CD4-positive, alpha-beta memory T cell (primary cell): ENCODE measurements at regions of chr22 and their contacts with region 1.

Region 1: GRCh38 chr22:32796865-32797573 is 4.5 kb upstream of the TIMP3 start:
- DNase-seq: peak; percentile 34 to 45 (median 44)
- H3K4me3 ChIP-seq: no peak overlapping the region
- H3K4me3 Mint-ChIP-seq: no peak overlapping the region
- H3K27ac ChIP-seq: no peak overlapping the region
- H3K27ac Mint-ChIP-seq: no peak overlapping the region
- H3K4me1 ChIP-seq: no peaks in the 10 kb centered on the region
- H3K4me1 Mint-ChIP-seq: peaks cover 0 to 9% (median 2%) of the 10 kb centered on the region in 4 donors
- H3K27me3 ChIP-seq: peaks cover 7% of the 10 kb centered on the region
- H3K27me3 Mint-ChIP-seq: peaks cover 22 to 35% of the 10 kb centered on the region in 2 donors

Region 2: GRCh38 chr22:32528984-32529982 is 267.7 kb before region 1 on chr22:
- CTCF ChIA-PET with region 1: interaction called, 38 read pairs
- POLR2A ChIA-PET with region 1: no interaction called
- intact Hi-C with region 1: no loop called
- DNase-seq: peak; percentile 34 to 50 (median 42)
- H3K4me3 ChIP-seq: no peak overlapping the region
- H3K4me3 Mint-ChIP-seq: no peak overlapping the region
- H3K27ac ChIP-seq: no peak overlapping the region
- H3K27ac Mint-ChIP-seq: no peak overlapping the region
- H3K4me1 ChIP-seq: no peaks in the 10 kb centered on the region
- H3K4me1 Mint-ChIP-seq: no peaks in the 10 kb centered on the region
- H3K27me3 ChIP-seq: no peaks in the 10 kb centered on the region
- H3K27me3 Mint-ChIP-seq: peaks cover 7 to 8% of the 10 kb centered on the region in 2 donors

Region 3: GRCh38 chr22:32660292-32660691 is 136.7 kb before region 1 on chr22:
- CTCF ChIA-PET with region 1: interaction called, 74 read pairs
- POLR2A ChIA-PET with region 1: interaction called, 3 read pairs
- intact Hi-C with region 1: loop called (anchors 1 kb)
- DNase-seq: peak in 4 of 5 donors; percentile 24 to 37 (median 28)
- H3K4me3 ChIP-seq: no peak overlapping the region
- H3K4me3 Mint-ChIP-seq: no peak overlapping the region
- H3K27ac ChIP-seq: no peak overlapping the region
- H3K27ac Mint-ChIP-seq: no peak overlapping the region
- H3K4me1 ChIP-seq: no peaks in the 10 kb centered on the region
- H3K4me1 Mint-ChIP-seq: no peaks in the 10 kb centered on the region
- H3K27me3 ChIP-seq: no peaks in the 10 kb centered on the region
- H3K27me3 Mint-ChIP-seq: peaks cover 7% of the 10 kb centered on the region in 2 donors

Region 4: GRCh38 chr22:32723643-32724042 is 73.4 kb before region 1 on chr22:
- CTCF ChIA-PET with region 1: interaction called, 11 read pairs
- POLR2A ChIA-PET with region 1: no interaction called
- intact Hi-C with region 1: no loop called
- DNase-seq: peak in 4 of 5 donors; percentile 11 to 25 (median 16)
- H3K4me3 ChIP-seq: no peak overlapping the region
- H3K4me3 Mint-ChIP-seq: peak overlapping the region in 7 of 8 donors; percentile 51 to 81 (median 69)
- H3K27ac ChIP-seq: no peak overlapping the region
- H3K27ac Mint-ChIP-seq: peak overlapping the region in 6 of 7 donors; percentile 7 to 92 (median 65)
- H3K4me1 ChIP-seq: peaks cover 24% of the 10 kb centered on the region
- H3K4me1 Mint-ChIP-seq: peaks cover 26 to 37% (median 33%) of the 10 kb centered on the region in 4 donors
- H3K27me3 ChIP-seq: no peaks in the 10 kb centered on the region
- H3K27me3 Mint-ChIP-seq: peaks cover 0 to 2% of the 10 kb centered on the region in 2 donors

Region 5: DNA sequence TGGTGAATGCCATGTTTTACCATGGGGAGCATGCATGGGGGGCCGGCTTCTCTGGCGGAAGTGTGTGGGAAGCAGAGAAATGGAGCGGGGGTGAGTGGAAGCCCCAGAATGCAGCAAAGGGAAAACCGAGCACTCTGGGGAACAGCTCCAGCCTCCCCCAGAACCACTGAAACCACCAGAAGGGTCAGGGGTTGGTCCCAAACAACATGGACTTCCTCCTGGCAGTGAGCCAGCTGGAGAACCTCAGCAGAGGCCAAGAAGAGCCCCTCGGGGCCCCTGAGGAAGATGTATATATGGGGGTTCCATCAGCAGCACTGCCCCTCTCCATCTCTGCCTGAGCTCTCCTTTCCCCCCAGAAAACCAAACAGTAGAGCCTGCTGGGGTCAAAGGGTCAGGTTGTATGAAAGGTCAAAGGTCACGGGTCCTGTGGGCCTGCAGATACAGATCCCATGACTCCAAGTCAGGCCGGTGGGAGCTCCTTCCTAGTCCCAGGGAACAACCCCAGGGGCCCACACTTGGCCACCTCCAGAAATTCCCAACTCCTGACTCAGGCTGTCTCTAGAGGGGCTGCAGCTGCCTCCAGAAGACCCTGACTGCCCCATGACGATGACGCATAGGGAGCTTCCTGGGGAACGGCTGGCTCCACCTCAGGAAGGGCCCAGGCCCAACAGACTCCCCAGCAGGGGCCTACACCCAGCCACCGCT is 44.1 kb before region 1 on chr22:
- CTCF ChIA-PET with region 1: interaction called, 11 read pairs
- POLR2A ChIA-PET with region 1: no interaction called
- intact Hi-C with region 1: no loop called
- DNase-seq: no peak
- H3K4me3 ChIP-seq: no peak overlapping the region
- H3K4me3 Mint-ChIP-seq: no peak overlapping the region
- H3K27ac ChIP-seq: no peak overlapping the region
- H3K27ac Mint-ChIP-seq: no peak overlapping the region
- H3K4me1 ChIP-seq: no peaks in the 10 kb centered on the region
- H3K4me1 Mint-ChIP-seq: no peaks in the 10 kb centered on the region
- H3K27me3 ChIP-seq: no peaks in the 10 kb centered on the region
- H3K27me3 Mint-ChIP-seq: peaks cover 0 to 5% of the 10 kb centered on the region in 2 donors

Region 6: DNA sequence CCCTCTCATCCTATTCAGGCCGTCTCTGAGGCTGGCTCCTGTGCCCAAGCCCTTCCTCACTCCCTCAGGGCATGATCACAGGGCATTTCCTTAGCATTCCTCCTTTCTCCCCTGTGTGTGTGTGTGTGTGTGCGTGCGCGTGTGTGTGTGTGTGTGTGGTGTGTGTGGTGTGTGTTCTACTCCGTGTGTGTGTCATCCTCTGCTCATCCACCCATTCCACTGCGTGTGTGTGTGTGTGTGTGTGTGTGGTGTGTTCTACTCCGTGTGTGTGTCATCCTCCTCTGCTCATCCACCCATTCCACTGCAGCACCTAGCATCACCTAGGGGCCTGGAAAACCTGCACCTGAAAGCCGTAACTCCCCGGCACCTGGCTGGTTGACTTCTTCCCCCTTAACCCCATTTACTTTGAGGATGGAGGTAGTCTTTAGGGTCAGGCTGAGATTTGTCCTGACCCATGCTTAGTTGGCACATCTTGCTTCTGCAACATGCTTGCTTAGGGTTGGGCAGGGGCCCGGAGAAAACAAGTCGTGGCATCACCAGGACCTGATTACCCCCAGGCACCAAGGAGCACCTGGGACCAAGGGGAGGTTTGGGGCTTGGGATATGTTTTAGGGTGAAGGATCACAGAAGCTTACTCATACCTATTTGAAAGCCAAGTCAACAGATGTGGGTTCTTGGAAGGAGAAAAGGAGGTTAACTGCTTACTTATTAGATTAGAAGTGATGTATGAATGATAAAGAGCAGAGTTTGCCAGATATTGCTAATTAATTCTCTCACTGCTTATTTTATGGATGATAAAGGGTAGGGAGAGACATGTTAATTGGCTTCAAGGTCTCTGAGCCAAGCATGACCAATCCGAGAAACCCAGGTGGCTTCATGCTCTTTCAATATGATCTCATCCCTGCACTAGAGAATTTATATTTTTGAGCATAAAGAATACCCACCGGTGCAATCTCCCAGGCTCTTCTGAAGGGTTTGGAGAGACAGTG is 23.4 kb after region 1 on chr22:
- CTCF ChIA-PET with region 1: no interaction called
- POLR2A ChIA-PET with region 1: no interaction called
- intact Hi-C with region 1: no loop called
- DNase-seq: no peak
- H3K4me3 ChIP-seq: no peak overlapping the region
- H3K4me3 Mint-ChIP-seq: no peak overlapping the region
- H3K27ac ChIP-seq: no peak overlapping the region
- H3K27ac Mint-ChIP-seq: no peak overlapping the region
- H3K4me1 ChIP-seq: no peaks in the 10 kb centered on the region
- H3K4me1 Mint-ChIP-seq: no peaks in the 10 kb centered on the region
- H3K27me3 ChIP-seq: no peaks in the 10 kb centered on the region
- H3K27me3 Mint-ChIP-seq: peaks cover 3 to 13% of the 10 kb centered on the region in 2 donors